HEK293T (cell line): ENCODE measurements at regions of chr14 and their contacts with region 1.

Region 1: DNA sequence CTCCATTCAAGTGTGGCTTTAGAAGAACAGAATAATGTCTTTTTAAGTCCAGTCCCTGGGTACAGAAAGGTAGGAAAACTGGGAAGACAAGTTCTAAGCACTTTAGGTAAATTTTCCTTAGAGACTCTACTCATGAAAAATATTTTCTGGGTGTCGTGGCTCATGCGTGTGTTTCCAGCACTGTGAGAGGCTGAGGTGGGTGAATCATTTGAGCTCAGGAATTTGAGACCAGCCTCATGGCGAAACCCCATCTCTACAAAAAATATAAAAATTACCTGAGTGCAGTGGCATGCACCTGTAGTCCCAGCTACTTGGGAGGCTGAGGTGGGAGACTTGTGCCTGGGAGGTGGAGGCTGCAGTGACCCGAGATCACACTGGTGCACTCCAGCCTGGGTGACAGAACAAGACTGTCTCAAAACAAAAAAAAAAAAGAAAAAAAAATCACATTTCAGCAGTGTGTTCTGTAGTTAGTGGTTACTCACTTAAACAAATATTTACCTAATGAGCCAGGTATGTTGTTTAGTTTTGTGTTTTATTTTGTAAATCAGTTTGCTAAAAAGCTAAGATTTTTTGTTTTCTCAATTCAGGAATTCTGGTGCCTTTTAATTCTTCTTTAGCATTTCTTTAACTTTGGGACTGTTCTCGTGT is 52.3 kb upstream of the RD3L start:
- DNase-seq: no peak

Region 2: DNA sequence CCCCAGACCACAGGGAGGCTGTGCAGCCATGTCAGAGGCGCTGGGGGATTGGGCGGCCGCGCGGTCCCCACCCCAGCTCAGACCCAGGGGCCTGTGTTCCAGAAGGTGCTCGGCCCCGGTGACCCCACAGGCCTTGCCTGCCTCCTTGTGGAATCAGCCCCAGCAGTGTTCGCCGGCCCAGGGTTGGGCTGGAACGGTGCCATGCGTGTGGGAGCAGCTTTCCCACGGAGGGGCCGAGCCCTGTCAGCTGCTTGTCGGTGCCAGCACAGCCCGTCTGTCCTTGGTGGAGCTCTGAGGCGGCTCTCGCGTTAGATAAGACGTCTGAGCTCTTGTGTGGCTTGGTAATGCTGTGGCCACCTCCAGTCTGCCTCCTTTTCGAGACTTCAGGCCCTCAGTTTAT is 270.5 kb before region 1 on chr14:
- CTCF ChIA-PET with region 1: no interaction called
- POLR2A ChIA-PET with region 1: no interaction called
- DNase-seq: no peak

Region 3: DNA sequence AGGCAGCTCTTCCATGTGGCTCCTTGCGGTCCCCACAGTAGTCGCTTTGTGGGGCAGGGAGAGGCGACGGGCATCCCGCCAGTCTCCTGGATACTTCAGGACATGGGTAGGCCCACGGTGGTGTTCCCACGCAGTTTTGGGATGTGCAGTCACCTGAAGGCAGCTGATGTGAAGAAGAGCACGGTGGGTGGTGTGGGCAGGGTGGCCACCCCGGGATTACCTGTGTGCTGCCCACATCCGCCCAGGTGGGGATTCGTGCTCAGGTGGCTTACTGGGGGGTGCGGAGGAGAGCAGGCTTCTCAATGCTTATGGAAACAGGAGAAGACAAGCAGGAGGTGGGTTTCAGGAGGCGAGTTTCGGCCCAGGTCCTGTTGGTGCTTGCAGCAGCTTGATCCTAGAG is 94.8 kb before region 1 on chr14:
- CTCF ChIA-PET with region 1: interaction called, 10 read pairs
- POLR2A ChIA-PET with region 1: no interaction called
- DNase-seq: no peak